Left ventricle myocardium superior (tissue), 1 donor: ENCODE measurements at regions of chr1 and their contacts with region 1.

Region 1: DNA sequence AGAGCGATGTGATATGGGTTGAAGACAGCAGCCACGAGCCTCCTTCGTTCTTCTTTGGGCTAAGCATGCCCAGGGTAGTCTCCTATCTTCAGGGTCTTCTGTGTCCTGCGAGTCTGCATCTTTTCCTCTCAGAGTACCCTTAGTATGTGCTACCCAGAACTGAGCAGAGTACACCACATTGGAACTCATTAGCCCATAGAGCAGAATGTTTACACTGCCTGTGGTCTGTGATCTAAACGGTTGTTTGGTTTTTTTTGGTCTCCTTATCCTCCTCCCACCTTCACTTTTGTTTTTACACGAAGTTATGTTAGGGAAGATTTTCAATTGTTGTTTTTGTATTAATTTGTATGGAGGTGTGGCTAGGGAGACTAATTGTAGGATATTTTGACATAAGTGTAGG is 126.4 kb downstream of the NEK7 start:
- DNase-seq: no peak
- ATAC-seq: peak; percentile 20

Region 2: DNA sequence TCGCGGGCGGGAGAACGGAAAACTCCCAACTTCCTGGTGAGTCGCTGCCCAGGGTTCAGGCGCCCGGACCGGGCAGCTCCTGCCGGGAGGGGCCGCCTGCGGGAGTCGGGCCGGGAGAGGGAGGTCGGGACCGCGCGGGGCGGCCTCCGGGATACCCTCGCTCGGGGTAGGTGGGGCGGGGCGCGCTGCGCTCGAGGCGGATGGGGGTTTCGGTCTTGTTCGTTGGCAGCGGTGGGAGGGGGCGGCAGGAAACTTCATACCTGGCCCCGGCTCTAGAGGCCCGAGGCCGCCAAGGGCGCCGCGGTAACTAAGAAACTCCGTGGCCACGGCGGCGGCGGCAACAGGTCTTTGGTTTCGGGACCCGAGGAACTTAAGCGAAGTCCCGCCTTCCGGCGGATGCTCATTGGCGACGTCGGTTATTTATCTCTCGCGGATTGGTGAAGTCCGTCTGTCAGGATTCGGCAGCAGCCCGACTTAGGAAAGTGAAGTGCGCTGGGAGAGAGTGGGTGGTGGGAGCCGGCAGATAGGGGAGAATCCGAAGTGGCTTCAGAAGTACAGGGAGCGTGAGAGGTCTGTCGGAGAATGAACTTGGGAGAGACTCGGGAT is 125.9 kb before region 1 on chr1:
- intact Hi-C with region 1: loop called (anchors 10 kb)
- DNase-seq: peak; percentile 91
- ATAC-seq: peak; percentile 75